ENCODE measurements at regions of chr9 and their contacts with region 1.

Region 1: DNA sequence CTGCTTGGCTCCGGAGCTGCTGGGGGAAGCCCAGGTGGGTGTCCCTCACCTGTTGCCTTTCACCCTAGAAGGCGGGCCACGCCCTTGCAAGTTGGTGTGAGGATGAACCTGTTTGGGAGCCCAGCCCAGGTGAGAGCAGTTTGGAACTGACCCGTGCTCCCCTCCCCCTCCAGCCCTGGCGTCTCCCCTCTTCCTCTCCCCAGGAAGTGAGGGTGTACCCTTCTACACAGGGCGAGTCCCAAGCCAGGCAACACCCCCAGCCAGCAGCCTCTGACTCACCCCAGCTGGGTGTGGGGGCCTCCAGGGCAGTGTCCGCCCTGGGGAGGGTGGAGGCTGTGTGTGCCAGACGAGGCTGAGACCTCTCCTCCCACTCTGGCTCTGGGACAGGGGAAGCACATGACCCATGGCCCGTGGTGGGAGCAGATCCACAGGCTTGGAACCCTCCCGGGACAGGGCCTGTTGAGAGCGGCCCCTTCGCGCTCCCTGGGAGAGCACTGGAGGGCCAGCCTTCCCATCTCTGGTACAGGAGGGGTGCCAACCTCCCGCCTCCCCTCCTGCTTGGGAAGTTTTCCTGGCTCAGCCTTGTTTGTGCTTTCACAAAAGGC is 10.5 kb downstream of the LRRC8A start:
- DNase-seq: peak; percentile 97
- H3K4me3 Mint-ChIP-seq: peak overlapping the region; percentile 21
- H3K27ac Mint-ChIP-seq: peak overlapping the region; percentile 69
- H3K4me1 Mint-ChIP-seq: peaks cover 20% of the 10 kb centered on the region
- H3K27me3 Mint-ChIP-seq: no peaks in the 10 kb centered on the region
- CTCF ChIP-seq: no peak

Region 2: DNA sequence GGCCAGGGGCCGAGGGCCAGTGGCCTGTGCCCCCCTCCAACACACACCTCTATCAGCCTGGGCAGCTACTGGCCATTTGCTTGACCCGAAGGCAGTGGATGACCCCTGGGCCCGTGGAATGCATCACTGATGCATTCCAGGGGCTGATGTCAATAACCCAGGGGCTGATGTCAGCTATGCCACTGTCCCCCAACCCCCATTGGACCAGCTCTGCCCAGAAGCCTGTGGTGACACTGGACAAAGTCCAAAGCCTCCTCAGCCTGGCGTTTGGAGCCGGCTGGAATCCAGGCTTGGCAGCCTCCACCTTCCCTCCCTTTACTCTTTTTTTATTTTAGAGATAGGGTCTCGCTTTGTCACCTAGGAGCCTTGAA is 16.6 kb before region 1 on chr9:
- CTCF ChIA-PET with region 1: interaction called, 5 read pairs
- POLR2A ChIA-PET with region 1: interaction called, 48 read pairs
- intact Hi-C with region 1: no loop called
- DNase-seq: no peak
- H3K4me3 Mint-ChIP-seq: no peak overlapping the region
- H3K27ac Mint-ChIP-seq: no peak overlapping the region
- H3K4me1 Mint-ChIP-seq: peaks cover 23% of the 10 kb centered on the region
- H3K27me3 Mint-ChIP-seq: no peaks in the 10 kb centered on the region
- CTCF ChIP-seq: no peak

Region 3: GRCh38 chr9:128881901-128882681 is 10.3 kb before region 1 on chr9 and contains the starts of genes KYAT1 and LRRC8A:
- CTCF ChIA-PET with region 1: interaction called, 5 read pairs
- POLR2A ChIA-PET with region 1: interaction called, 48 read pairs
- intact Hi-C with region 1: no loop called
- DNase-seq: peak; percentile 96
- H3K4me3 Mint-ChIP-seq: peak within 1 kb of the TSS; percentile 99
- H3K27ac Mint-ChIP-seq: peak within 1 kb of the TSS; percentile 95
- H3K4me1 Mint-ChIP-seq: peaks cover 40% of the 10 kb centered on the region
- H3K27me3 Mint-ChIP-seq: no peaks in the 10 kb centered on the region
- CTCF ChIP-seq: no peak
- total RNA-seq, gene KYAT1: 3.8 and 5.7 TPM in 2 replicates
- total RNA-seq, gene LRRC8A: 30.9 and 31.6 TPM in 2 replicates

Region 4: GRCh38 chr9:128902351-128903078 is 10.1 kb after region 1 on chr9:
- CTCF ChIA-PET with region 1: interaction called, 3 read pairs
- POLR2A ChIA-PET with region 1: interaction called, 40 read pairs
- intact Hi-C with region 1: no loop called
- DNase-seq: peak; percentile 72
- H3K4me3 Mint-ChIP-seq: peak overlapping the region; percentile 40
- H3K27ac Mint-ChIP-seq: peak overlapping the region; percentile 75
- H3K4me1 Mint-ChIP-seq: peaks cover 28% of the 10 kb centered on the region
- H3K27me3 Mint-ChIP-seq: no peaks in the 10 kb centered on the region
- CTCF ChIP-seq: no peak

Region 5: GRCh38 chr9:128920381-128921058 is 28.1 kb after region 1 on chr9 and contains the start of gene PHYHD1:
- CTCF ChIA-PET with region 1: interaction called, 7 read pairs
- POLR2A ChIA-PET with region 1: interaction called, 16 read pairs
- intact Hi-C with region 1: loop called (anchors 5 kb)
- DNase-seq: peak; percentile 86
- H3K4me3 Mint-ChIP-seq: no peak within 1 kb of the TSS
- H3K27ac Mint-ChIP-seq: no peak within 1 kb of the TSS
- H3K4me1 Mint-ChIP-seq: peaks cover 20% of the 10 kb centered on the region
- H3K27me3 Mint-ChIP-seq: no peaks in the 10 kb centered on the region
- CTCF ChIP-seq: no peak
- total RNA-seq, gene PHYHD1: 0.70 and 2.0 TPM in 2 replicates